Naive thymus-derived CD4-positive, alpha-beta T cell (primary cell): ENCODE measurements at regions of chr20 and their contacts with region 1.

Region 1: DNA sequence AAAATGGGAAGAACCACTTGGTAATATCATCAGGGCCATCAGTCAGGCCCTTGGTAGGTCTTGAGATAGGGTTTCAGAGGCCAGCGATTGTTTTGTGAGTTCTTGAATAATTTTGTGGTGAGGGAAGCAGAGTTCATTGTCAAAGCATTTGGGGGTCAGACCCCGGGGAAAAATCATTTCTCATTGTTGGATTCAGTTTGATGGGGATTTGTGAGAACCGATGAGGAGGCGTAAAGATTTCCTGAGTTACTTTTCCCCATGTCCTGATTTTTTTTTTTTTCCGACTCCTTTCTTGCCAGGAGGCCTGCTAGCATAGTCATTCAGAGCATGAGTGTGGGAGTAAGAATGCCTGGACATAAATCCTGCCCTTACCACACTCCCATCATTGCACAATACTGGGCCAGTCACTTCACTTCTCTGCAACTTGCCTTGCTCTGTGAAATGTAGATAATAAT is 60.3 kb downstream of the TSHZ2 start:
- DNase-seq: no peak
- ATAC-seq: no peak
- H3K4me3 ChIP-seq: no peak overlapping the region
- H3K4me3 Mint-ChIP-seq: no peak overlapping the region
- H3K27ac ChIP-seq: no peak overlapping the region
- H3K27ac Mint-ChIP-seq: peak overlapping the region in 3 of 9 donors; percentile 11 to 42 (median 31)
- H3K4me1 ChIP-seq: peaks cover 0 to 19% of the 10 kb centered on the region in 2 donors
- H3K4me1 Mint-ChIP-seq: peaks cover 22 to 70% (median 51%) of the 10 kb centered on the region in 7 donors
- H3K27me3 ChIP-seq: no peaks in the 10 kb centered on the region
- H3K27me3 Mint-ChIP-seq: peaks cover 0 to 7% (median 0%) of the 10 kb centered on the region in 5 donors

Region 2: DNA sequence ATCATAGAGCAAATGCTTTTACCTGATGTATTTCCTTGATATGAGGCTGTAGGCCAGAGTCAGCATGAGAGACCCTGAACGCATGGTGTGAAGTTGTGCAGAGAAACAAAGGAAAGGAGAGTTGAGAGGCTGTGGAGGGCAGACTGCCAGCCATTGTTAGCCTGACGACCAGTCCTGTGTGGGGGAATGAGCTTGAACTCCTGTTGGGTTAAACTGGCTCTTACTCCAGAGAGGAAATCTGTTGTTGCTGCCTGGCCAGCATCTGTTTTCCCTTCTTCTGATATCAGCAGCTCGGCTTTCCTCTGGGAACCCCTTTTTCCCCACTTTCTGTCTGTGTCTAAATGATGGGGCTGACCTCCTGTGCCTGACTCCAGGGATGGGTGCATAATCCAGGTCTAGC is 682.7 kb before region 1 on chr20:
- CTCF ChIA-PET with region 1: interaction called, 4 read pairs
- POLR2A ChIA-PET with region 1: no interaction called
- intact Hi-C with region 1: loop called in 1 of 2 experiments (anchors 1 kb)
- DNase-seq: no peak
- ATAC-seq: no peak
- H3K4me3 ChIP-seq: no peak overlapping the region
- H3K4me3 Mint-ChIP-seq: no peak overlapping the region
- H3K27ac ChIP-seq: no peak overlapping the region
- H3K27ac Mint-ChIP-seq: peak overlapping the region in 1 of 9 donors; percentile 34
- H3K4me1 ChIP-seq: no peaks in the 10 kb centered on the region
- H3K4me1 Mint-ChIP-seq: peaks cover 0 to 15% (median 9%) of the 10 kb centered on the region in 7 donors
- H3K27me3 ChIP-seq: no peaks in the 10 kb centered on the region
- H3K27me3 Mint-ChIP-seq: peaks cover 0 to 5% (median 0%) of the 10 kb centered on the region in 5 donors

Region 3: DNA sequence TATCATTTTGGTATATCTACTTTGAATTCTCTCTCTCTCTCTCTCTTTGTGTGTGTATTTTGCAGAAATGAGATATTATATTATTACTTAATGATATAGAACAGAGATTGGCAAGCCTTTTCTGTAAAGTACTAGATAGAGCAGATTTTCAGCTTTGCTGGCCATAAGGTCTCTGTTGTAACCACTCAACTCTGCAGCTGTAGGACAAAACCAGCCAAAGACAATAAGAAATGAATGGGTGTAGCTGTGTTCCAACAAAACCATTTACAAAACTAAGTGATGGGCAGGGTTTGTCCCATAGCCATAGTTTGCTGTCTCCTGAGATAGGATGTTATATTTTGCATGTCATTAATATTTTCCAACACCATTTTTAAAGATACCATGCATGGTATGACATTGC is 151.5 kb before region 1 on chr20:
- CTCF ChIA-PET with region 1: no interaction called
- POLR2A ChIA-PET with region 1: no interaction called
- intact Hi-C with region 1: no loop called
- DNase-seq: no peak
- ATAC-seq: no peak
- H3K4me3 ChIP-seq: no peak overlapping the region
- H3K4me3 Mint-ChIP-seq: no peak overlapping the region
- H3K27ac ChIP-seq: no peak overlapping the region
- H3K27ac Mint-ChIP-seq: no peak overlapping the region
- H3K4me1 ChIP-seq: no peaks in the 10 kb centered on the region
- H3K4me1 Mint-ChIP-seq: no peaks in the 10 kb centered on the region
- H3K27me3 ChIP-seq: no peaks in the 10 kb centered on the region
- H3K27me3 Mint-ChIP-seq: peaks cover 0 to 5% (median 0%) of the 10 kb centered on the region in 5 donors

Region 4: GRCh38 chr20:53001498-53002301 is 30.8 kb before region 1 on chr20:
- CTCF ChIA-PET with region 1: interaction called, 10 read pairs
- POLR2A ChIA-PET with region 1: interaction called, 7 read pairs
- intact Hi-C with region 1: loop called in 1 of 2 experiments (anchors 5 kb)
- DNase-seq: peak in 7 of 9 donors; percentile 49 to 79 (median 71)
- ATAC-seq: peak; percentile 82
- H3K4me3 ChIP-seq: peak overlapping the region; percentile 32
- H3K4me3 Mint-ChIP-seq: peak overlapping the region; percentile 73 to 94 (median 84)
- H3K27ac ChIP-seq: peak overlapping the region; percentile 88
- H3K27ac Mint-ChIP-seq: peak overlapping the region in 7 of 9 donors; percentile 89 to 99 (median 97)
- H3K4me1 ChIP-seq: peaks cover 0 to 64% of the 10 kb centered on the region in 2 donors
- H3K4me1 Mint-ChIP-seq: peaks cover 27 to 97% (median 87%) of the 10 kb centered on the region in 7 donors
- H3K27me3 ChIP-seq: no peaks in the 10 kb centered on the region
- H3K27me3 Mint-ChIP-seq: no peaks in the 10 kb centered on the region

Region 5: DNA sequence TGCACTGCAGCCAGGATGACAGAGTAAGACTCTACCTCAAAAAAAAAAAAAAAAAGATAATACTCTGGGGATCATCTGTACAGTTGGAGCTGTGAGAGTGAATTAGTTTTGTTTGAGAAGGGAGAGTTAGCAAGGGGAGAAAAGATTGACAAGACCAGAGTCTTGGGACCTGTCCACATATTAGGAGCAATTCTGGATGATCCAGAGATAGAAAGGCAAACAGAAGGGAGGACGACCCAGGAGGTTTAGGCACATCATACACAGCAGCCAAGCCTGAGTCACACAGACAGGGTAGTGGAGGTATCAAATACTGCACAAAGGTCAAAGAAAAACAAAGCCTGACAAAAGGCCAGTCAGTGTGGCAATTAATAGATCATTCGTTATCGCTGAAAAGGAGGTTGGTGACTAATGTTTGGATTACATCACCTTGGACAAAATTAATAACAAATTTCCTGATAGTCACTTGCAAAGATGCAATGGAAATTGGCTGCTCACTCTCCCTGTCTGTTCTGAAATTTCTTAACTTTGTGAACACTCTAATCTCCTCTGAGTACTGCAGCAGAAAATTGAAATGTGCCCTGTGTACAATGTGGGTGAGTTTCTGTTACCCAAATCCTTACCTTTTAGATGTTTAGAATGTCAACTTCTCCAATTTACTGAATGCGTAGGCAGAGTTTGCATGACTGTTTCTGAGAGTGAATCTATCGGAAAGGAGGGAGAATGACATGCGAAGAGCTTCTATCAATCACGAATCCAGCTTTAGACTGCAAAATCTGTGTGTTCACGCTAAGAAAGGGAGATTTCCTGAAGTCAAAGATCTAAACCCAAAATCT is 45.1 kb after region 1 on chr20:
- CTCF ChIA-PET with region 1: no interaction called
- POLR2A ChIA-PET with region 1: no interaction called
- intact Hi-C with region 1: loop called in 1 of 2 experiments (anchors 5 kb)
- DNase-seq: no peak
- ATAC-seq: no peak
- H3K4me3 ChIP-seq: no peak overlapping the region
- H3K4me3 Mint-ChIP-seq: no peak overlapping the region
- H3K27ac ChIP-seq: no peak overlapping the region
- H3K27ac Mint-ChIP-seq: no peak overlapping the region
- H3K4me1 ChIP-seq: peaks cover 0 to 37% of the 10 kb centered on the region in 2 donors
- H3K4me1 Mint-ChIP-seq: peaks cover 15 to 44% (median 19%) of the 10 kb centered on the region in 7 donors
- H3K27me3 ChIP-seq: peaks cover 0 to 3% of the 10 kb centered on the region in 2 donors
- H3K27me3 Mint-ChIP-seq: peaks cover 0 to 8% (median 0%) of the 10 kb centered on the region in 5 donors